ENCODE measurements at regions of chr1 and their contacts with region 1.

Region 1: DNA sequence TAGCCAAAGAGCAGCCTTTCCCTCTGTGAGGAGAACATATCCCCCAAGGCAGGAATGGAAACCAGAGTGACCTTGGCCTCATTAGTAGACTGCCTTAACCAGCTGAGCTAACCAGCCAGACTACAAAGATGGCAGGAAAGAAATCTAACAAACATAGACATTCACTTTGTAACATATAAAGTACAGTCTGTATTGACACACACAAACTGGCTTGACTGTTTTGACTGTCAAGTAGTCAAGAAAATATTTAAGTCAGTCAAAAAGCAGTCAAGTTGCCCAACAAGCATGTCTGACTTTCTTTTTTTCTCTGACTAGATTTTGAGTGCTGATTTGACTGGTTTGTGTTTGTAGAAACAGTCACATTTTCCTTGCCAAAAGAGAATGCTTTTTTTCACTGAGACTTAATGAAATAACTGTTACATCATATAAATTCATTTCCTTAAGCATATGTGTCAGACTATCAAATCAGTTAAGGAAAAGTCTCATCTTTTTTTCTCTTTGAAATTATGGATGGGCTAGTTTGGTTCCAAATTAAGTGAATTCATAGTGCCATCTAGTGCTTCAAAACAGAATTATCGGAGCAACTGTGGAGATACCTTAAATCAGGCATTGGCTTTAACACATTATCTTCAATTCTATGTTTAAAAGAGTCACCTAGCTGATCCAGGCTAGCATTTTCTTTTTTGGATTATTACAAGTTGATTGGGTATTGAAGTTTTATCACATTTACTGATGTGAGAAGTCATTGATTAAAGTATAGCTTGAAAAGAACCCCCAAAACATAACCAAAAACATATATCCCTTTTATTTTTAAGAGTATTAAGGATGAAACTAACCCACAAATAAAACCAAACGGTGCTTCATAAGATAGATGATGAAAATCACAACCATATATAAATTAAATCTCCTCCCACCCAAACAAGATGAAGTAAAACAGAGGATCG is 75.0 kb downstream of the ATP6V1G3 start:
- DNase-seq: peak; percentile 61
- H3K4me3 ChIP-seq: no peak overlapping the region
- H3K27ac ChIP-seq: no peak overlapping the region
- H3K4me1 ChIP-seq: no peaks in the 10 kb centered on the region
- H3K27me3 ChIP-seq: no peaks in the 10 kb centered on the region
- CTCF ChIP-seq: peak; percentile 74

Region 2: GRCh38 chr1:197521118-197521739 is 944.2 kb before region 1 on chr1:
- CTCF ChIA-PET with region 1: no interaction called
- POLR2A ChIA-PET with region 1: no interaction called
- intact Hi-C with region 1: loop called (anchors 5 kb)
- DNase-seq: peak; percentile 68
- H3K4me3 ChIP-seq: no peak overlapping the region
- H3K27ac ChIP-seq: no peak overlapping the region
- H3K4me1 ChIP-seq: no peaks in the 10 kb centered on the region
- H3K27me3 ChIP-seq: no peaks in the 10 kb centered on the region
- CTCF ChIP-seq: peak; percentile 78

Region 3: GRCh38 chr1:197541411-197541810 is 924.1 kb before region 1 on chr1:
- CTCF ChIA-PET with region 1: no interaction called
- POLR2A ChIA-PET with region 1: no interaction called
- intact Hi-C with region 1: loop called (anchors 5 kb)
- DNase-seq: no peak
- H3K4me3 ChIP-seq: no peak overlapping the region
- H3K27ac ChIP-seq: no peak overlapping the region
- H3K4me1 ChIP-seq: no peaks in the 10 kb centered on the region
- H3K27me3 ChIP-seq: no peaks in the 10 kb centered on the region
- CTCF ChIP-seq: no peak

Region 4: DNA sequence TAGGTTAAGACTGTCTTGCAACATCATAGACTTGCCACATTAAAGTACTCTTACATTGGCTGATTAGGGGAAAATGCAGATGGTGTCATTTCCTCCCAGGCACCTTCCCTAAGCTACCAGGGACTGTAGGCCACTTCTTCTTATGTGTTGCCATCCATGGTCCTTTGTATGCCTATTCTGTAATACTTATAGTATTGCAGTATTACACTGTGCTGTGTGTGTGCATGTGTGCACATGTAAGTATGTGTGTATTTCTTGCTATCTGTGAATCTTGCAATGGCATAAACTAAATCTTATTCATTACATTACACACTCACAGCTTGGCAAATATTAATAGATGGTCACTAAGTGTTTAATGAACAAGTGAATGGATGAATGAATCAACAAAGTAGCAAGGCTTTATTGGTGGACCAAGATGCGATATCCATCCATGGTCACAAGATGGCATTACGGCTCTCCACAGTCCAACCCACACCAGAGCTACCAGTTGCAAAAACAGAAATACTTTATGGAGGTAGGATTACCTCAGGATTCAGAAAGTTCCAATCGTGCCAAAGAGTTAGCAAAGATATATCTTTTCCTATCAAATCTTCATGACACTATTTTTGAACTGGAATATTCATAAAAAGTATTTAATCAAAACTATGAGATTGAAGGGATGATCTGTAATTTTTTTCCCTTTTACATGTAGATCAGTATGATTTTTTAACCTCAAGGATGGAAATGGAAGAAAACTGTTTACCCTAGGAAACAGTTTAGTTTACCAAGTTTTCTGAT is 850.4 kb before region 1 on chr1:
- CTCF ChIA-PET with region 1: no interaction called
- POLR2A ChIA-PET with region 1: no interaction called
- intact Hi-C with region 1: loop called (anchors 2 kb)
- DNase-seq: peak; percentile 49
- H3K4me3 ChIP-seq: no peak overlapping the region
- H3K27ac ChIP-seq: no peak overlapping the region
- H3K4me1 ChIP-seq: no peaks in the 10 kb centered on the region
- H3K27me3 ChIP-seq: no peaks in the 10 kb centered on the region
- CTCF ChIP-seq: peak; percentile 71

Region 5: GRCh38 chr1:197915862-197916499 is 549.5 kb before region 1 on chr1:
- CTCF ChIA-PET with region 1: no interaction called
- POLR2A ChIA-PET with region 1: no interaction called
- intact Hi-C with region 1: loop called (anchors 2 kb)
- DNase-seq: peak; percentile 68
- H3K4me3 ChIP-seq: peak overlapping the region; percentile 34
- H3K27ac ChIP-seq: no peak overlapping the region
- H3K4me1 ChIP-seq: peaks cover 32% of the 10 kb centered on the region
- H3K27me3 ChIP-seq: peaks cover 99% of the 10 kb centered on the region
- CTCF ChIP-seq: peak; percentile 61

Region 6: DNA sequence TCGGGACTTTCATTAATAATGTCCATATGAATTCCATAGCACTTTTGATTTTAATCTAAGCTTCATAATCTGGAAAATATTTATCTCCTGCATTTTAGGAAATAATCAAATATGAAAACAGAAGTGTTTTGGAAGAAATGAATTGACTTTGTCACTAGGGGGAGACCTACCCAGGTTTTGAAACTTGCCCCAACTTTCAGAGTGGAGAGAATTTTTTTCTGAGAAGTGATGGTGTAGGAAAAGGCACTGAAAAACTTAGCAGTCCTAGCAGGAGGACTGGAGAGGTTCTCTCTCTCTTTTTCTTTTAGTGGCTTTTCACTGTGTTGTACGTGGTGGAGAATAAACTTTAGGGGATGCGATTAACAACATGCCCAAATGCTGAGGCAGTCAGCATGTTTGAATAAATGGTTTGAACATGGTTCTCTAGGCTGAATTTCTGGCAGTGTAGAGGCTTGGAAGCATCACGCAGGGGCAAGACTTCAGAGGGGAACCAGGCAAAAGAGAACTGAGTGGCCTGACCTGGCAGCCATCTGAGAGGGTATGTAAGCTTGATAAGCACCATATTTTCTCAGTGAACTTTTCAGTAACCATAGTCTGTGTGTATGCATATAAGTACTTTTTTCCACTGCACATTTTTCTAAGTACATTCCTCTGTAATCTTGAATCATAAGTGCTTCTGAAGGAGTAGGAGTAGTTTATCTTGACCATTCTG is 377.0 kb before region 1 on chr1:
- CTCF ChIA-PET with region 1: no interaction called
- POLR2A ChIA-PET with region 1: no interaction called
- intact Hi-C with region 1: loop called (anchors 5 kb)
- DNase-seq: peak; percentile 50
- H3K4me3 ChIP-seq: no peak overlapping the region
- H3K27ac ChIP-seq: no peak overlapping the region
- H3K4me1 ChIP-seq: no peaks in the 10 kb centered on the region
- H3K27me3 ChIP-seq: no peaks in the 10 kb centered on the region
- CTCF ChIP-seq: peak; percentile 76

Region 7: GRCh38 chr1:198102454-198102827 is 363.0 kb before region 1 on chr1:
- CTCF ChIA-PET with region 1: no interaction called
- POLR2A ChIA-PET with region 1: no interaction called
- intact Hi-C with region 1: no loop called
- DNase-seq: no peak
- H3K4me3 ChIP-seq: no peak overlapping the region
- H3K27ac ChIP-seq: no peak overlapping the region
- H3K4me1 ChIP-seq: no peaks in the 10 kb centered on the region
- H3K27me3 ChIP-seq: peaks cover 4% of the 10 kb centered on the region
- CTCF ChIP-seq: no peak

Region 8: GRCh38 chr1:198201956-198202784 is 263.3 kb before region 1 on chr1:
- CTCF ChIA-PET with region 1: no interaction called
- POLR2A ChIA-PET with region 1: no interaction called
- intact Hi-C with region 1: loop called (anchors 10 kb)
- DNase-seq: no peak
- H3K4me3 ChIP-seq: no peak overlapping the region
- H3K27ac ChIP-seq: no peak overlapping the region
- H3K4me1 ChIP-seq: peaks cover 10% of the 10 kb centered on the region
- H3K27me3 ChIP-seq: no peaks in the 10 kb centered on the region
- CTCF ChIP-seq: no peak

Region 9: DNA sequence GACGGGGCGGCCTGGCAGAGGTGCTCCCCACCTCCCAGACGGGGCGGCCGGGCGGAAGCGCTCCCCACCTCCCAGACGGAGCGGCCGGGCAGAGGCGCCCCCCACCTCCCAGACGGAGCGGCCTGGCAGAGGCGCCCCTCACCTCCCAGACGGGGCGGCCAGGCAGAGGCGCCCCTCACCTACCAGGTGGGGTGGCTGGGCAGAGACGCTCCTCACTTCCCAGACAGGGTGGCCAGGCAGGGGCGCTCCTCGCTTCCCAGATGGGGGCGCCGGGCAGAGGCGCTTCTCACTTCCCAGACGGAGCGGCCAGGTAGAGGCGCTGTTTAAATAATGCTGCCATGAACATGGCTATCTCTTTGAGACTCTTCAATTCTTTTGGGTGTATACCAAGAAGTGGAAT is 118.7 kb after region 1 on chr1:
- CTCF ChIA-PET with region 1: no interaction called
- POLR2A ChIA-PET with region 1: no interaction called
- intact Hi-C with region 1: no loop called
- DNase-seq: no peak
- H3K4me3 ChIP-seq: no peak overlapping the region
- H3K27ac ChIP-seq: no peak overlapping the region
- H3K4me1 ChIP-seq: no peaks in the 10 kb centered on the region
- H3K27me3 ChIP-seq: no peaks in the 10 kb centered on the region
- CTCF ChIP-seq: no peak

Measured in A673 (cell line).